ENCODE measurements at regions of chr5 and their contacts with region 1.

Region 1: DNA sequence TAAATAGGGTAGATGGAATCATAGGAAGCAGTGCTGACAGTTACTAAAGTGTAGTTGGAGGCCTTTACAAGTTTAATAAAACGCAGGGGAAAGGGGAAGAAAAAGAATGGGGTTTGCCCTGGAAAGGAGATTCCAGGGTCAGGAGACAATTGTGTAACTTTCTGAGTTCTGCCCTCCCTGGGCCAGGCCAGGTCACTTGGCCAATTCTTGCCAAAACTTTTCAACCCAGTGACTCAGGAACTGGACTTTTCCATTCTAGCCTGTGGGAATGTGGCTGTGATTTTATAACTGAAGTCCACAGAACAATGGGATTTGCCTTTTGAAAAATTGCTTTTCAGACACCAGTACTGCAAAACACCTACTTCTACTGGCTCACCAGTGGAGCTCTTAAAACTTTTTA is 289.8 kb upstream of the ANKRD55 start:
- DNase-seq: peak; percentile 21 to 64
- H3K4me3 ChIP-seq: no peak overlapping the region
- H3K27ac ChIP-seq: peak overlapping the region; percentile 18
- H3K4me1 ChIP-seq: peaks cover 59% of the 10 kb centered on the region
- H3K27me3 ChIP-seq: no peaks in the 10 kb centered on the region
- CTCF ChIP-seq: no peak

Region 2: GRCh38 chr5:56440871-56441740 is 81.9 kb before region 1 on chr5:
- CTCF ChIA-PET with region 1: no interaction called
- POLR2A ChIA-PET with region 1: no interaction called
- intact Hi-C with region 1: loop called (anchors 10 kb)
- DNase-seq: peak; percentile 29 to 86
- H3K4me3 ChIP-seq: no peak overlapping the region
- H3K27ac ChIP-seq: peak overlapping the region; percentile 75
- H3K4me1 ChIP-seq: peaks cover 27% of the 10 kb centered on the region
- H3K27me3 ChIP-seq: no peaks in the 10 kb centered on the region
- CTCF ChIP-seq: no peak

Region 3: GRCh38 chr5:56475689-56476486 is 47.1 kb before region 1 on chr5:
- CTCF ChIA-PET with region 1: no interaction called
- POLR2A ChIA-PET with region 1: no interaction called
- intact Hi-C with region 1: loop called (anchors 1 kb)
- DNase-seq: no peak
- H3K4me3 ChIP-seq: no peak overlapping the region
- H3K27ac ChIP-seq: peak overlapping the region; percentile 51
- H3K4me1 ChIP-seq: peaks cover 50% of the 10 kb centered on the region
- H3K27me3 ChIP-seq: no peaks in the 10 kb centered on the region
- CTCF ChIP-seq: no peak

Region 4: DNA sequence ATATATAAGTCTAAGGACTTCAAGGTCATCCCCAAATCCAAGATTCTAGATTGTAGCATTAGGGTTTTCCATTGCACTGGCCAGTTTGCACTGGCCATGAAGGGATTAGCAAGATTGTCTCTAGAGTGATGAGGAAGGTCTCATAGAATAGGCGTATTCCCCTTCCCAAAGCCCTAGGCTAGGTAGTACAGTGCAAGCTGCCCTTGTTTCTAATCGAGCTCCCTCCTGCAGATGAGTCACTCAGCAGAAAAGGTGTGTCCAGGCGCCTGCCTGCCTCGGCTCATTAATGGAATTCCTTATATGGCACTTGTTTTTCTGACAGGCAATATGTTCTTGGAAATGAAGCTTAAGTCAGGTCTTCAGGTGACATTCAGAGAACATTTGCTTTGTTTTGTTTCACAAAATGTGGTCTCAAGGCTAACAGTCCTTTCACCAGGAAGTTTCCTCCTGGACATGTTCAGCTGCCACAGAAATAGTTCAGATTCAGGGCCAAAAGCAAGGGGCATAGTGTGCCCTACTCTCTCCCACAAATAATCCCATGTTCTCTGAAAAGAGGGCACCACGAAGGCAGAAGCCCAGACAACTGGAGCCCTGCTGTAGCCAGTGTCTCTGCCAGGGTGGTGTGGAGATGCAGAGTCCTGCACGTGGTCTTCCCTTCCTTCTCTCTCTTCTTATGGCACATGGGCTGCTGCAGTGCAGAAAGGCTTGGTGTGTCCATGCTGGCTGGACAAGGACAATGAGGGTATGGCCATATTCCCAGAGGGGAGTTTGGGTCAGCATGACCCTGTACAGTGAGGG is 11.3 kb after region 1 on chr5:
- CTCF ChIA-PET with region 1: no interaction called
- POLR2A ChIA-PET with region 1: interaction called, 10 read pairs
- intact Hi-C with region 1: no loop called
- DNase-seq: peak; percentile 72 to 89
- H3K4me3 ChIP-seq: no peak overlapping the region
- H3K27ac ChIP-seq: peak overlapping the region; percentile 66
- H3K4me1 ChIP-seq: peaks cover 29% of the 10 kb centered on the region
- H3K27me3 ChIP-seq: no peaks in the 10 kb centered on the region
- CTCF ChIP-seq: no peak

Region 5: DNA sequence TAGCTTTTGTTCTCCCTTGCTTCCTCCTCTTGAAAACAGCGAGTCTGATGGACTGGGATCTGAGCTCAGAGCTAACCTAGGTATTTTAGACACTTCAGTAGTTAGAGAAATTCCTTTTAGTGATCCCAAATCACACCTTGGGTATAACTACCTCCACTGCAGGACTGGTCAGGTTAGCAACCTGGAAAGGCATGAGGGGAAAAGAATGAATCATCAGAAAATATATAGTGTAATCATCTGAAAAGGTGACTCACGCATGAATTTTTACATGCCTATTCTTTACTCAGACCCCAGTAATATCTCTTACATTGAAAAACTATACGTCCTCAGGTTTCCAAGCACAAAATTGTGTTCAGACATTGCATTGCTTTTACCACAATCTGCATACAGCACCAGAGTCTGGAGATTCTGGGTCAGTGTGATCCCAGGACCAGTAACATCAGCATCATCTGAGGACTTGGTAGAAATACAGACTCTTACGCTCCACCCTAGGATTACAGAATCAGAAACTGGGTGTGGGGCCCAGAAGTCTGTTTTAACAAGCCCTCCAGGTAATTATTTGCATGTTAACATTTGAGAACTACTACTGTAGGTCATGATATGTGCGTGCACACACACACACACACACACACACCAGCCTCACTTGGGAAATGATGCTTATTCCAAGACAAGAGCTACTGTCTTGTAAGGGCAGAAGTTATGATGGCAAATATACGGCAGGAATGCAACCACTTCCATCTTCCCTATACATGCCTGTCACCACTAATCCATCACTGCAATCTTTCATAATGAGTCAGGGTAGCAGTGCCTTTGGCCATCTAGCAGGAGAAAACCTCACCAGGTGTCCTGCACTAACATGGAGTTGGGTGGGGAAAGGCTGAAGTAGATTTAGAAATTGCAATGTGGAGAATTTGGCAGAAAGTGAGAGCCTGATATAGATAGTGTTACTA is 20.8 kb after region 1 on chr5:
- CTCF ChIA-PET with region 1: no interaction called
- POLR2A ChIA-PET with region 1: interaction called, 3 read pairs
- intact Hi-C with region 1: loop called (anchors 1 kb)
- DNase-seq: peak; percentile 62 to 97
- H3K4me3 ChIP-seq: no peak overlapping the region
- H3K27ac ChIP-seq: peak overlapping the region; percentile 96
- H3K4me1 ChIP-seq: peaks cover 39% of the 10 kb centered on the region
- H3K27me3 ChIP-seq: no peaks in the 10 kb centered on the region
- CTCF ChIP-seq: no peak

Region 6: GRCh38 chr5:56838409-56839039 is 315.6 kb after region 1 on chr5:
- CTCF ChIA-PET with region 1: interaction called, 3 read pairs
- POLR2A ChIA-PET with region 1: no interaction called
- intact Hi-C with region 1: loop called (anchors 5 kb)
- DNase-seq: peak in 1 of 2 experiments; percentile 58
- H3K4me3 ChIP-seq: no peak overlapping the region; the same call in 1 of the 2 replicates
- H3K27ac ChIP-seq: peak overlapping the region; percentile 32
- H3K4me1 ChIP-seq: peaks cover 21% of the 10 kb centered on the region
- H3K27me3 ChIP-seq: no peaks in the 10 kb centered on the region
- CTCF ChIP-seq: peak; percentile 75